ENCODE measurements at regions of chr4 and their contacts with region 1.

Region 1: GRCh38 chr4:153318696-153319320 is 25.7 kb upstream of the MND1 start:
- DNase-seq: peak; percentile 50
- H3K4me3 Mint-ChIP-seq: no peak overlapping the region
- H3K27ac Mint-ChIP-seq: no peak overlapping the region
- H3K4me1 Mint-ChIP-seq: no peaks in the 10 kb centered on the region
- H3K27me3 Mint-ChIP-seq: no peaks in the 10 kb centered on the region

Region 2: GRCh38 chr4:153232768-153233167 is 86.0 kb before region 1 on chr4:
- CTCF ChIA-PET with region 1: no interaction called
- intact Hi-C with region 1: loop called (anchors 1 kb)
- DNase-seq: peak; percentile 39
- H3K4me3 Mint-ChIP-seq: no peak overlapping the region
- H3K27ac Mint-ChIP-seq: no peak overlapping the region
- H3K4me1 Mint-ChIP-seq: peaks cover 36% of the 10 kb centered on the region
- H3K27me3 Mint-ChIP-seq: no peaks in the 10 kb centered on the region

Region 3: GRCh38 chr4:153349206-153349805 is 30.5 kb after region 1 on chr4:
- CTCF ChIA-PET with region 1: no interaction called
- intact Hi-C with region 1: no loop called
- DNase-seq: no peak
- H3K4me3 Mint-ChIP-seq: no peak overlapping the region
- H3K27ac Mint-ChIP-seq: no peak overlapping the region
- H3K4me1 Mint-ChIP-seq: peaks cover 31% of the 10 kb centered on the region
- H3K27me3 Mint-ChIP-seq: no peaks in the 10 kb centered on the region

Region 4: GRCh38 chr4:153919667-153920066 is 600.9 kb after region 1 on chr4:
- CTCF ChIA-PET with region 1: no interaction called
- intact Hi-C with region 1: no loop called
- DNase-seq: no peak
- H3K4me3 Mint-ChIP-seq: no peak overlapping the region
- H3K27ac Mint-ChIP-seq: no peak overlapping the region
- H3K4me1 Mint-ChIP-seq: peaks cover 16% of the 10 kb centered on the region
- H3K27me3 Mint-ChIP-seq: peaks cover 5% of the 10 kb centered on the region

Measured in activated naive CD4-positive, alpha-beta T cell treated with anti-CD3 and anti-CD28 coated beads for 36 hours (primary cell).